ENCODE measurements at regions of chr15 and their contacts with region 1.

Region 1: GRCh38 chr15:41585127-41586047 is 26.4 kb downstream of the TYRO3 start:
- DNase-seq: no peak
- H3K4me3 ChIP-seq: peak overlapping the region; percentile 46
- CTCF ChIP-seq: peak; percentile 55

Region 2: GRCh38 chr15:41347236-41347635 is 238.2 kb before region 1 on chr15:
- CTCF ChIA-PET with region 1: no interaction called
- POLR2A ChIA-PET with region 1: no interaction called
- DNase-seq: no peak
- H3K4me3 ChIP-seq: no peak overlapping the region
- CTCF ChIP-seq: no peak

Region 3: GRCh38 chr15:41603941-41604911 is 18.8 kb after region 1 on chr15:
- CTCF ChIA-PET with region 1: interaction called, 34 read pairs
- POLR2A ChIA-PET with region 1: no interaction called
- DNase-seq: peak; percentile 47
- H3K4me3 ChIP-seq: peak overlapping the region; percentile 50
- CTCF ChIP-seq: peak; percentile 86